ENCODE measurements at regions of chr5 and their contacts with region 1.

Region 1: DNA sequence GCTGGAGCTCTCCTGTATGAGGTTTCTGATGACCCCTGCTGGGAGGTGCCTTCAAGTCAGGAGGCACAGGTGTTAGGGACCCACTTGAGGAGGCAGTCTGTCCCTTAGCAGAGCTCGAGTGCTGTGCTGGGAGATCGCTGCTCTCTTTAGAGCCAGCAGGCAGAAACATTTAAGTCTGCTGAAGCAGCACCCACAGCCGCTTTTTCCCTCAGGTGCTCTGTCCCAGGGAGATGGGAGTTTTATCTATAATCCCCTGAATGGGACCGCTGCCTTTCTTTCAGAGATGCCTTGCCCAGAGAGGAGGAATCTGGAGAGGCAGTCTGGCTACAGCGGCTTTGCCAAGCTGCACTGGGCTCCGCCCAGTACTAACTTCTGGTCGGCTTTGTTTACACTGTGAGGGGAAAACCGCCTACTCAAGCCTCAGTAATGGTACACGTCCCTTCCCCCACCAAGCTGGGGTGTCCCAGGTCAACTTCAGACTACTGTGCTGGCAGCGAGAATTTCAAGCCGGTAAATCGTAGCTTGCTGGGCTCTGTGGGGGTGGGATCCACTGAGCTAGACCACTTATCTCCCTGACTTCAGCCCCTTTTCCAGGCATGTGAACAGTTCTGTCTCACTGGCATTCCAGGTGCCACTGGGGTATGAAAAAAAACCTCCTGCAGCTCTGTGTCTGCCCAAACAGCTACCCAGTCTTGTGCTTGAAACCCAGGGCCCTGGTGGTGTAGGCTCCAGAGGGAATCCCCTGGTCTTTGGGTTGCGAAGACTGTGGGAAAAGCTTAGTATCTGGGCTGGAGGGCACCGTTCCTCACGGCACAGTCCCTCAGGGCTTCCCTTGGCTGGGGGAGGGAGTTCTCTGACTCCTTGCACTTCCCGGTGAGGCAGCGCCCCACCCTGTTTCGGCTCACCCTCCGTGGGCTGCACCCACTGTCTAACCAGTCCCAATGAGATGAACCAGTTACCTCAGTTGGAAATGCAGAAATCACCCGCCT is 171.1 kb downstream of the CWC27 start:
- DNase-seq: peak; percentile 53
- ATAC-seq: peak; percentile 85
- H3K4me3 ChIP-seq: peak overlapping the region; percentile 35; the same call in 1 of the 2 replicates
- H3K27ac ChIP-seq: peak overlapping the region; percentile 89
- H3K4me1 ChIP-seq: peaks cover 9% of the 10 kb centered on the region
- H3K27me3 ChIP-seq: no peaks in the 10 kb centered on the region
- CTCF ChIP-seq: no peak

Region 2: DNA sequence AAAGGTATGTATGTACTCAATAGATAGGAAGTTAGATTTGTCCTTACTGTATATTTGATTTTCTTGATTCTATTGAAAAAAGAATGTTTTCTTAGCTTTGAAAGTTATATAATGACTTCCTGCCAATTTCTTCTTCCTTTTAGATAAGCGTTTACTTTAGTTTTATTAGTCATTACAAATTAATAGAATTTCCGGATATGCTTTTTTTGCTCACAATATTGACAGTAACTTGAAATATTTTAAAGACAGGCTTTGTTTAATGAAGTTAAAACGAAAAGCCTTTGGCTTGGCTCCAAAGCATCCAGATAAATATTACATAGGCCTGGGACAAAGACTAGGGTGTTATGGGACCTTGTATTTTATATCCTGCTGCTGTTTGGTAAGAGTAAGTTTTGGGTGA is 121.6 kb before region 1 on chr5:
- CTCF ChIA-PET with region 1: no interaction called
- POLR2A ChIA-PET with region 1: no interaction called
- intact Hi-C with region 1: loop called (anchors 5 kb)
- DNase-seq: peak; percentile 65
- ATAC-seq: peak; percentile 94
- H3K4me3 ChIP-seq: no peak overlapping the region
- H3K27ac ChIP-seq: 0 out of 2 replicates have a peak overlapping the region, but pooled peaks have one; percentile 2
- H3K4me1 ChIP-seq: peaks cover 14% of the 10 kb centered on the region; the same call in 1 of the 2 replicates
- H3K27me3 ChIP-seq: no peaks in the 10 kb centered on the region
- CTCF ChIP-seq: no peak

Measured in PC-3 (cell line).